Activated CD8-positive, alpha-beta T cell treated with anti-CD3 and anti-CD28 coated beads, Interleukin-2, amount 10 ng/mL, durations not matched to agents 7 days and 5 days (primary cell): ENCODE measurements at regions of chr9 and their contacts with region 1.

Region 1: GRCh38 chr9:99092643-99093491 is 12.0 kb upstream of the TGFBR1 start:
- DNase-seq: peak; percentile 86
- ATAC-seq: peak; percentile 88
- H3K4me3 Mint-ChIP-seq: peak overlapping the region; percentile 66
- H3K27ac Mint-ChIP-seq: peak overlapping the region; percentile 98
- H3K4me1 Mint-ChIP-seq: peaks cover 81% of the 10 kb centered on the region
- H3K27me3 Mint-ChIP-seq: no peaks in the 10 kb centered on the region

Region 2: DNA sequence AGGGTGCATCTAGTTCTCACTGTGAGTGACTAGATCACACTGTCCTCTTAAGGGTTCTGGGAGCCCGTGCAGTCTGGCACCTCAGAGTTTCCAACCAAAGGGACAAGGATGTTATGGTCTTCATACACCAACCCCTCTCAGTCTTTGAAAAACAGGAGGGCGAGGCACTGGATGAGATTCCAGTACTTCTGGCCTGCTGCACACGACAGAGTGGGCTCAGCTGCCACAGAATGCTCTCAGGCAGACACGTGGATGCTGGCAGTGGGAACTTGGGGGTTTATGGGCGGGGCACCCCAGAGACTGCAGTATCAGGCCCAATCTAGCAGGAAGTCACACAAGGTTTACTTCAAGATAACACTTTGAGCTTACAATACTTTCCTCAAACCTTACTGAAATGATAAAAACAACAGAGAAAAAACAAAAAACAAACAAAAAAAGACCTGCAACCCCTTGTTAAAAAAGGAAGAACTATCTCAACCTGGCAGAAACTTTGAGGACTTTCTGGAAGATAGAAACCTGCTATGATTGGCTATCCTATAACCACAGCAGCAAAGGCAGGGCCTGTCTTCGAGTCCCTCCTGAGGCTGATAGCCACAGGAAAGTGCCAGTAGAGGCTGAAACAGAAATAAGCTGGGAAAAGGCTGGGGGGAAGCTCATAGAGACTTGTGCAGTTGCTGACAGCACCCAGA is 16.2 kb before region 1 on chr9:
- CTCF ChIA-PET with region 1: interaction called, 11 read pairs
- POLR2A ChIA-PET with region 1: interaction called, 4 read pairs
- DNase-seq: peak; percentile 78
- ATAC-seq: peak; percentile 94
- H3K4me3 Mint-ChIP-seq: peak overlapping the region; percentile 34
- H3K27ac Mint-ChIP-seq: peak overlapping the region; percentile 93
- H3K4me1 Mint-ChIP-seq: peaks cover 48% of the 10 kb centered on the region
- H3K27me3 Mint-ChIP-seq: no peaks in the 10 kb centered on the region

Region 3: DNA sequence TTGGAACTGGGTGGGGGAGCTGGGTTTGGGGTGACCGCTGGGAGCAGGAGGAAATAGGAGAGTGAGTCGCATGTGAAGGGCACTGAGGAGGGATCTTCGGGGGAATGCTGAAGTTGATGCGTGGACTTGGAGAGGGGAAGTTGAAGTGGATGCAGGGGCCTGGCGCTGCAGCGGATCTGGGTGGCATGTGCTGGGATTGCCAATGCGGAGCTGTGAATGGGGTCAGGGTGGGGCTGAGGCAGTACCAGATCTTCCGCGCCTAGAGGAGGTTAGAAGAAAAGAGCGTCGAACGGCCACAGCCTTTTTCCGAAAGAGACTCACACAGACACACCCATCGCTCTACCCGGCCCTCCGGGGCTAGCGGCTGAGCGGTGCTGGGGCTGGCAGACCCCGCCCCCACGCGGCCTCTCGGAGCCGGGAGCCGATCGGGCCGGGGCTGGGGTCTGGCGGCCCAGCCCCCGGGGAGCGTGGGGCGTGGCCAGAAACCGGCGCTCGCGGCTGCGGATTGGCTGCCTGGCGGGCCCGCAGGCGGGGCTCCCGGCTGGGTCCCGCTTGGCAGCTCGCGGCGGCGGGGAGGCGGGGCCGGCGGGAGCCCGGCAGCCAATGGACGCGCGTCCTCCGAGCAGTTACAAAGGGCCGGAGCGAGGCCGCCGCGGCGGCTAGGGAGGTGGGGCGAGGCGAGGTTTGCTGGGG is 11.7 kb after region 1 on chr9 and contains the start of gene TGFBR1:
- CTCF ChIA-PET with region 1: interaction called, 32 read pairs
- POLR2A ChIA-PET with region 1: interaction called, 62 read pairs
- DNase-seq: peak; percentile 94
- ATAC-seq: peak; percentile 90
- H3K4me3 Mint-ChIP-seq: peak within 1 kb of the TSS; percentile 89
- H3K27ac Mint-ChIP-seq: peak within 1 kb of the TSS; percentile 92
- H3K4me1 Mint-ChIP-seq: peaks cover 76% of the 10 kb centered on the region
- H3K27me3 Mint-ChIP-seq: no peaks in the 10 kb centered on the region
- total RNA-seq, gene TGFBR1: 90.1 to 90.9 TPM